ENCODE measurements at regions of chr5 and their contacts with region 1.

Region 1: DNA sequence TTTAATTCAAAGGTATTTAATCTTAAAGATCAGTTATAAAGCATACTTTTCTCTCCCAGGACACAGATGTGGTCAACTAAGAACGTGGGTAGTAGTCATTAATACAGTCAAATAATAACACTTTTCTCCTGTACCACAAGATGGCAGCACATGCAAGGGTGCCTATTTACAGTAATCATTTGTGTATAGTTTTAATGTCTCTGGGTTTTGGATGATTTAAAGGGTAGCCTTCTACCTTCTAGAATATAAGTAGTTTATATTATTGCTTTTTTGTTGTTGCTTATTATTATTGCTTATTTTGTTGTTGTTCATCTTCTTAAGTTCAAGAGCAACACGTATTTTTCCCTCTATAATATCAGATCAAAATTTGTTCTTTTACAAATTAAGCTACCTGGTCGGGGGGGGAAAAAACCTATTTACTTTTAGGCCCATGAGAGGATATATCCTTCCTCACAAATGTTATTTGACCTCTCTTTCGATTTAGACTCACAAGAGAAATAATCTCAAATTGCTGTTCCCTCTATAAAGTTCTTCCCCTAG is 59.6 kb upstream of the SLC27A6 start:
- DNase-seq: peak in 7 of 9 donors; percentile 3 to 47 (median 42)
- ATAC-seq: peak; percentile 76
- H3K4me3 ChIP-seq: no peak overlapping the region
- H3K4me3 Mint-ChIP-seq: no peak overlapping the region
- H3K27ac ChIP-seq: no peak overlapping the region
- H3K27ac Mint-ChIP-seq: no peak overlapping the region
- H3K4me1 ChIP-seq: no peaks in the 10 kb centered on the region
- H3K4me1 Mint-ChIP-seq: no peaks in the 10 kb centered on the region
- H3K27me3 ChIP-seq: no peaks in the 10 kb centered on the region
- H3K27me3 Mint-ChIP-seq: peaks cover 0 to 9% (median 6%) of the 10 kb centered on the region in 5 donors

Region 2: DNA sequence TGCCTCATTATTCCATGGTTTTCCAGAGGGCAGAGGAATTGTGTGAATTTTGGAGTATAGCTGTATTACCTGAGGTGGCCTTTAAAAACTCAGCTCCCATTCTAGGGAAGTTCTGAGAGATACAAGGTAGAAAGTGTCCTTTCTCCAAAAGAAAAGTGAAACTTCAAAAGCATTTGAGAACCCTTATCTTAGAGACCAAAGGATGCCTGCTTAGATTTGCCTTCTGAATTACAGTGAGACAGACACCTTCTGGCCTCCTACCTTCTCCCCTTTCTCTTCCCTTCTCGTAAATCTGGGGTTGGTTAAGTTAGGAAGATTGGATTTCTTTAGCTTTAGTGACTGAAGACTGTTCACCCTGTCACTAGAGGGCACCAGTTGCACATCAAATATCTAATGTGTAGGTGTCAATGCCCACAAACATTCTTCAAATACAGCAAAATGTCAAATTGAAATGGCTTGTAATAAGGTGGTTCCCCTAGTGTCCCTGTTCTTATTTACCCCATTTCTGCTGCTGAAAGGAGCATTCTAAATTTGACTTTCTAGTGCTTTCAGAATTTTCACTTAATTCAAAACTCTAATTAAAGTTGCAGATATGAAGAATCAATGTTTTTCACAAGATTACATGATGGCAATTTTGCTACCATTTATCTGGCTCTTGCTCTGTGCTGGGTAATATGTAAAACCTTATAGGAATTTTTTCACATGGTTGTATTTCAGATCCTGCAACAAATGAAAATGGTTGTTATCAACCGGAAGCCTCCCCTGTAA is 1341.5 kb before region 1 on chr5:
- CTCF ChIA-PET with region 1: no interaction called
- POLR2A ChIA-PET with region 1: no interaction called
- intact Hi-C with region 1: loop called in 1 of 2 experiments (anchors 10 kb)
- DNase-seq: peak in 8 of 9 donors; percentile 21 to 61 (median 47)
- ATAC-seq: peak; percentile 79
- H3K4me3 ChIP-seq: no peak overlapping the region
- H3K4me3 Mint-ChIP-seq: no peak overlapping the region
- H3K27ac ChIP-seq: no peak overlapping the region
- H3K27ac Mint-ChIP-seq: no peak overlapping the region
- H3K4me1 ChIP-seq: no peaks in the 10 kb centered on the region
- H3K4me1 Mint-ChIP-seq: peaks cover 0 to 16% (median 0%) of the 10 kb centered on the region in 7 donors
- H3K27me3 ChIP-seq: no peaks in the 10 kb centered on the region
- H3K27me3 Mint-ChIP-seq: peaks cover 12 to 32% (median 20%) of the 10 kb centered on the region in 5 donors

Region 3: GRCh38 chr5:129094087-129094923 is 188.7 kb after region 1 on chr5 and contains the start of gene ISOC1:
- CTCF ChIA-PET with region 1: interaction called, 5 read pairs
- POLR2A ChIA-PET with region 1: no interaction called
- intact Hi-C with region 1: loop called in 1 of 2 experiments (anchors 1 kb)
- DNase-seq: peak; percentile 89 to 95 (median 94)
- ATAC-seq: peak; percentile 96
- H3K4me3 ChIP-seq: peak within 1 kb of the TSS; percentile 72
- H3K4me3 Mint-ChIP-seq: peak within 1 kb of the TSS; percentile 89 to 95 (median 92)
- H3K27ac ChIP-seq: peak within 1 kb of the TSS; percentile 79
- H3K27ac Mint-ChIP-seq: peak within 1 kb of the TSS; percentile 52 to 94 (median 90)
- H3K4me1 ChIP-seq: peaks cover 7 to 8% of the 10 kb centered on the region in 2 donors
- H3K4me1 Mint-ChIP-seq: peaks cover 13 to 47% (median 35%) of the 10 kb centered on the region in 7 donors
- H3K27me3 ChIP-seq: no peaks in the 10 kb centered on the region
- H3K27me3 Mint-ChIP-seq: peaks cover 0 to 24% (median 0%) of the 10 kb centered on the region in 5 donors
- total RNA-seq, gene ISOC1: 5.3 to 18.9 (median 11.9) TPM

Region 4: GRCh38 chr5:129125810-129126209 is 220.2 kb after region 1 on chr5:
- CTCF ChIA-PET with region 1: interaction called, 3 read pairs
- POLR2A ChIA-PET with region 1: no interaction called
- intact Hi-C with region 1: loop called (anchors 2 kb)
- DNase-seq: peak in 1 of 9 donors; percentile 17
- ATAC-seq: peak; percentile 49
- H3K4me3 ChIP-seq: peak overlapping the region; percentile 29
- H3K4me3 Mint-ChIP-seq: peak overlapping the region in 9 of 10 donors; percentile 36 to 80 (median 63)
- H3K27ac ChIP-seq: peak overlapping the region; percentile 43
- H3K27ac Mint-ChIP-seq: peak overlapping the region; percentile 55 to 87 (median 82)
- H3K4me1 ChIP-seq: peaks cover 0 to 14% of the 10 kb centered on the region in 2 donors
- H3K4me1 Mint-ChIP-seq: peaks cover 7 to 18% (median 12%) of the 10 kb centered on the region in 7 donors
- H3K27me3 ChIP-seq: no peaks in the 10 kb centered on the region
- H3K27me3 Mint-ChIP-seq: no peaks in the 10 kb centered on the region

Region 5: DNA sequence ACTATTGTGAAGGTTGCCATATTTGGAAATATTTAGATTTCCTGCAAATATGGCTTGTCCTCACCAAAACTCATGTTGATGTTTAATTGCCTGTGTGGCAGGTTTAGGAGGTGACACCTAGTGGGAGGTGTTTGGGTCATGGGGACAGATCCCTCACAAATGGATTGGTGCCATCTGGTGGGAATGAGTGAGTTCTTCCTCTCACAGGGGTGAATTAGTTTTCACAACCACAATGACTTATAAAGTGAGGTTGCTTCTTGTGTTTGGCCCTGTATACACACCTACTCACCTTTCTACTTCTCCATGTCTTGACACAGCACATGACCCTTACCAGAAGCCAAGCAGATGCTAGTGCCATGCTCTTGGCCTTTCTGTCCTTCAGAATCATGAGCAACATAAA is 230.0 kb after region 1 on chr5:
- CTCF ChIA-PET with region 1: no interaction called
- POLR2A ChIA-PET with region 1: no interaction called
- intact Hi-C with region 1: loop called (anchors 1 kb)
- DNase-seq: peak in 2 of 9 donors; percentile 7 to 21
- ATAC-seq: no peak
- H3K4me3 ChIP-seq: no peak overlapping the region
- H3K4me3 Mint-ChIP-seq: no peak overlapping the region
- H3K27ac ChIP-seq: no peak overlapping the region
- H3K27ac Mint-ChIP-seq: no peak overlapping the region
- H3K4me1 ChIP-seq: no peaks in the 10 kb centered on the region
- H3K4me1 Mint-ChIP-seq: no peaks in the 10 kb centered on the region
- H3K27me3 ChIP-seq: no peaks in the 10 kb centered on the region
- H3K27me3 Mint-ChIP-seq: peaks cover 0 to 4% (median 0%) of the 10 kb centered on the region in 5 donors

Region 6: DNA sequence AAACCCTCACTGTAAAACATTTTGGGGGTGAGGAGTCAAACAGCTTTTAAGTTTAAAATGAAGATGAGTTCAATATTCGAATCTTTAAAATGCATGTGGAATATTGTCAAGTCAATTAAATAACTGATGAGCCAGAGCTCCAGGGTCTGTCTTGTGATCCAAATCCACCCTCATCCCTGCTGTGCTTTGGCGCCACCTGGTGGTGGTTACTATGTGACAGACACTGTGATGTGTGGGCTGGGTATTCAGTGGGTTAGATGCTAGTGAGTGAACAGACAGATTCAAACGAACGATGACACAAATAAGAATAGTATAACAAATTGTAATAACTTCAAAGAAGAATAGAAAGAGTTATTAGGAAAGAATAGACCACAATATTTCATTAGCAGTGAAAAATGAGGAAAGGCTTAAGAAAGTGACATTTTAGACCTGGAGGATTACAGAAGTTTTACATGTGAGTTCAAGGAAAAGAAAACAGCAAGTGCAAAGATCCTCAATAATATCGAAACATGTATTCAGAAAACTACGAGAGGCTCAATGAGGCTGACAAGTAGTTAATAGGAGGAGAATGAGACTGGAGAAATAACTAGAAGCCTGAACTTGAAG is 947.2 kb after region 1 on chr5:
- CTCF ChIA-PET with region 1: interaction called, 3 read pairs
- POLR2A ChIA-PET with region 1: no interaction called
- intact Hi-C with region 1: loop called in 1 of 2 experiments (anchors 1 kb)
- DNase-seq: peak; percentile 3 to 71 (median 35)
- ATAC-seq: peak; percentile 76
- H3K4me3 ChIP-seq: no peak overlapping the region
- H3K4me3 Mint-ChIP-seq: no peak overlapping the region
- H3K27ac ChIP-seq: no peak overlapping the region
- H3K27ac Mint-ChIP-seq: no peak overlapping the region
- H3K4me1 ChIP-seq: no peaks in the 10 kb centered on the region
- H3K4me1 Mint-ChIP-seq: no peaks in the 10 kb centered on the region
- H3K27me3 ChIP-seq: no peaks in the 10 kb centered on the region
- H3K27me3 Mint-ChIP-seq: peaks cover 0 to 23% (median 11%) of the 10 kb centered on the region in 5 donors

Measured in naive thymus-derived CD4-positive, alpha-beta T cell (primary cell).